Right cardiac atrium (tissue), 5 donors: ENCODE measurements at regions of chr22 and their contacts with region 1.

Region 1: GRCh38 chr22:17084554-17085276 is at the start of gene IL17RA:
- DNase-seq: peak; percentile 91 to 97 (median 95)
- ATAC-seq: peak; percentile 99
- H3K4me3 ChIP-seq: peak within 1 kb of the TSS; percentile 80
- H3K27ac ChIP-seq: peak within 1 kb of the TSS; percentile 55
- H3K4me1 ChIP-seq: peaks cover 2% of the 10 kb centered on the region
- H3K27me3 ChIP-seq: no peaks in the 10 kb centered on the region
- total RNA-seq, gene IL17RA: 8.7 to 13.4 (median 12.6) TPM

Region 2: GRCh38 chr22:17149076-17149810 is 64.5 kb after region 1 on chr22:
- intact Hi-C with region 1: no loop called
- DNase-seq: no peak
- ATAC-seq: no peak
- H3K4me3 ChIP-seq: no peak overlapping the region
- H3K27ac ChIP-seq: no peak overlapping the region
- H3K4me1 ChIP-seq: peaks cover 3% of the 10 kb centered on the region
- H3K27me3 ChIP-seq: no peaks in the 10 kb centered on the region

Region 3: GRCh38 chr22:17164392-17165024 is 79.8 kb after region 1 on chr22:
- intact Hi-C with region 1: loop called in 2 of 4 experiments (anchors 10 kb)
- DNase-seq: no peak
- ATAC-seq: no peak
- H3K4me3 ChIP-seq: no peak overlapping the region
- H3K27ac ChIP-seq: no peak overlapping the region
- H3K4me1 ChIP-seq: peaks cover 2% of the 10 kb centered on the region
- H3K27me3 ChIP-seq: no peaks in the 10 kb centered on the region